Right cardiac atrium (tissue), 5 donors: ENCODE measurements at regions of chr1 and their contacts with region 1.

Region 1: DNA sequence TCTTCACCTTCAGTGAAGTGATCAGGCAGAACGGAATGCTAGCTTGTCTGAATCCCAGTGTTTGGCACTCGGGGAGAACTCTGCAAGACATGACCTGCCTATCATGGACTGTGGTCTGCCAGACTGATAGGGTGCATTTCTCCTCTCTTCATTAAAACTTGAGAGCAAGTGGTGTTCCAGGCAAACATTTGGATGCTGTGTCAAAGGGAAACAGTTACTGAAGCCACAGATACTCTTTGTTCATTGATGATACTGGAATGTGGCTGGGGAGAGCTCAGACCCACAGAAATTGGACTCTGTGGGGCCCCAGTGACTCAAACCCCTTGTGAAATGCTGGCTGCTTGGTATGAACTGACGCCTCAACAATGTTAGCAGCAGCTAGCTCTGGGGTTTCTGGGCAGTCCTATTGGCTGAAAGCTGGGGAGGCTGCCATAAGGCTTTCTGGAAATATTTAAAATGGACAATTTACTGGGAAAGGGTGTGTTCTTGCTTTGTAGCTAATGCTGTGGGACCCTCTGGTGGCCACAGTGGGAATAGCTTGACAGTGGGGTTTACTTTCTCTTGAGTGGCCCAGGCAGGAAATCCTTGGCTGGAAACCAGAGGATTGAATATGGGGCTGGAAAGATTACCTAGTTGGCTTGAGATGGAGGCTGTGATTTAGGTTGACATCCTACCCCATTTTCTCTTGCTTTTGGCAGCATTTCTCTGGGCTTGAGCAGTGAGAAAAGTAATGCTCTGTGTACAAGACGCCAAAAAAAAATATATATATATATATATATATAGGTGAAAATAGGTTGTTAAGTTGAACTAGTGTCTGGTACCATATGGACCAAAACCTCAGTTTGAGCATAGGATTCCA is 8.0 kb upstream of the S100A10 start:
- DNase-seq: peak; percentile 91 to 96 (median 91)
- ATAC-seq: peak; percentile 76 to 83
- H3K4me3 ChIP-seq: no peak overlapping the region
- H3K27ac ChIP-seq: peak overlapping the region; percentile 77
- H3K4me1 ChIP-seq: peaks cover 3% of the 10 kb centered on the region
- H3K27me3 ChIP-seq: no peaks in the 10 kb centered on the region

Region 2: GRCh38 chr1:151934048-151934493 is 67.5 kb before region 1 on chr1:
- intact Hi-C with region 1: loop called in 3 of 4 experiments (anchors 2 to 5 kb)
- DNase-seq: no peak
- ATAC-seq: peak; percentile 84 to 91
- H3K4me3 ChIP-seq: no peak overlapping the region
- H3K27ac ChIP-seq: no peak overlapping the region
- H3K4me1 ChIP-seq: no peaks in the 10 kb centered on the region
- H3K27me3 ChIP-seq: no peaks in the 10 kb centered on the region

Region 3: DNA sequence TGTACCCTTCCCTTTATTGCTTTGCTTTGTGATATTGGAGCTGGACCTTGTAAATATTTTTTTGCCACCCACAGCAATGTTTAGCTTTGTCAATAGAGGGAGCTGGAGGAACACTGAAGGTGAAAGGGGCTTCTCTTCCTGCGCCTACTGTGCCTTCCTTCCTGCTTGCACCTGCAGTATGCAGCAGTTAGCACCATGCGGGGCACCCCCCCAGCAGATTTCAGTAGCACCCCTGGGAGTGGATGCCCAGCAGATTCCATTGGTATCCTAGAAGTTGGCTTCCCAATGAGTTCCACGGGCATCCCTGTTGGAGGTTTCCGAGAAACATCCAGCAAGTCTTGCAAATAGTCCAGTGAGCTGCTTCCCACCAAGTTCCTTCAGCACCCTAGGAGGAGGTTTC is 33.6 kb before region 1 on chr1:
- intact Hi-C with region 1: loop called in 2 of 4 experiments (anchors 5 kb)
- DNase-seq: peak in 1 of 3 donors; percentile 61
- ATAC-seq: peak; percentile 60 to 65
- H3K4me3 ChIP-seq: no peak overlapping the region
- H3K27ac ChIP-seq: no peak overlapping the region
- H3K4me1 ChIP-seq: peaks cover 4% of the 10 kb centered on the region
- H3K27me3 ChIP-seq: no peaks in the 10 kb centered on the region

Region 4: GRCh38 chr1:152047730-152048402 is 46.2 kb after region 1 on chr1:
- intact Hi-C with region 1: no loop called
- DNase-seq: peak; percentile 95 to 96 (median 95)
- ATAC-seq: peak; percentile 96 to 97
- H3K4me3 ChIP-seq: no peak overlapping the region
- H3K27ac ChIP-seq: peak overlapping the region; percentile 95
- H3K4me1 ChIP-seq: peaks cover 3% of the 10 kb centered on the region
- H3K27me3 ChIP-seq: no peaks in the 10 kb centered on the region

Region 5: GRCh38 chr1:152096121-152096865 is 94.7 kb after region 1 on chr1:
- intact Hi-C with region 1: no loop called
- DNase-seq: no peak
- ATAC-seq: no peak
- H3K4me3 ChIP-seq: no peak overlapping the region
- H3K27ac ChIP-seq: no peak overlapping the region
- H3K4me1 ChIP-seq: no peaks in the 10 kb centered on the region
- H3K27me3 ChIP-seq: no peaks in the 10 kb centered on the region